B cell (primary cell): ENCODE measurements at regions of chr1 and their contacts with region 1.

Region 1: DNA sequence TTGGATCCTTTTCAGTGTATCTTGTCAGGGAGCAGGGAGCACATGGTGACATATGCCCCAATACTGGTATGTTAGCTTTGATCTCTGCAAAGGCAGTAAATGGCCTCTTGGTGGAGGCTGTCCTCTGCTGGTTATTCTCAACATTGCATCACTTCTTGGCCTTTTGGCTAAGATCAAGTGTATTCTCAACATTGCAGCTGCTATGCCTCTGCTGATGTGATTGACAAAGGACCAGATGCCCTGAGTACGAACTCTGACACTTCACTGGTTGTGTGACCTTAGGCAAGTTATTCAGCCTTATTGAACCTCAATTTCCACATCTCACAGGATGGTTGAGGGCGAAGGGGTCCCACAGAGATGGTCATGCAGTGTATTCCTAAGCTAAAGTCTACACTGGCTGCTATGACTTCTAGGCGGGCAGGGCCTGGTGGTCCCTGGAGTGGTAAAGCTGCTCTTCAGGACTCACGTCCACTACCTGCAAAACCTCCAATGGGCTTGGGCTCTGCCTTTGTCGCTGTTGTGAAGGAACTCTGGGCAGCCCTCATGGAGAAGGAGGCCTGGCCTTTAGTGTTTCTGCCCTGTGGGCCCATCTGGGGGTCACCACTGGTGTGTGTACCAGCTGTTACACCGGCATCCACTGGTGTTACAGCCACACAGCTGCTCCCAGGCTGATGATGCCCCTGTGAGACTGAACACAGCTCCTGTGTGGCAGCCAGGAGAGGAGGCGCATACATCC is 64.8 kb downstream of the DNTTIP2 start:
- DNase-seq: peak; percentile 80
- ATAC-seq: peak; percentile 91
- H3K4me3 ChIP-seq: no peak overlapping the region
- H3K4me3 Mint-ChIP-seq: no peak overlapping the region
- H3K27ac ChIP-seq: no peak overlapping the region
- H3K27ac Mint-ChIP-seq: no peak overlapping the region
- H3K4me1 ChIP-seq: peaks cover 14 to 22% of the 10 kb centered on the region in 2 donors
- H3K4me1 Mint-ChIP-seq: peaks cover 17% of the 10 kb centered on the region
- H3K27me3 ChIP-seq: no peaks in the 10 kb centered on the region
- H3K27me3 Mint-ChIP-seq: no peaks in the 10 kb centered on the region
- CTCF ChIP-seq: peak; percentile 97

Region 2: DNA sequence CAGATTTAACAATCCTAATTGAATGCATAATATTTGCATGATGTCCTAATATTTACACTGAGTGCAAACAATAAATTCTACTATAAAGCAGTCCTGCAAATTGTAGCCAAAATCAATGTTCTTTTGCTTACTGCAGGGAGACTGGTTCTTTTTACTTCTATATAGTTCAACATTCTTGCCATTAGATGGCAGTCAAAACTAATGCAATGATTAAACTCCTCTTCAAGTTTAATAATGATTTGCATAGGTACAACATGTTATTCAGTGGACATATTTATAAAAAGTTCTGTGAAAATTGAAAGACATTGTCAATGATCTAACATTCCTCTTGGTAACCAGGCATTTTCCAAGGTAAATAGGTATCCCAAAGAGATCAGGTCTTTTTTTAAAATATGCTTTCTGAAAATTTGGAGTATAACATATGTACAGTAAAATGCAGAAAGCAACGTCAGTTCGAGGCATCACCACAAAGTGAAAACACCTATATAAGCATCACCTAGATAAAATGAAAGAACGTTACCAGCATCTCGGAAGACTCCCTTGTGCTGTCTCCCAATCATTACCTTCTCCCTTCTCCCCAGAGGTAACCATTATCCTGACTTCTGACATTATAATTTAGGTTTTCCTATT is 376.1 kb before region 1 on chr1:
- CTCF ChIA-PET with region 1: interaction called, 22 read pairs
- POLR2A ChIA-PET with region 1: no interaction called
- intact Hi-C with region 1: loop called (anchors 1 kb)
- DNase-seq: peak; percentile 67
- ATAC-seq: peak; percentile 64
- H3K4me3 ChIP-seq: no peak overlapping the region
- H3K4me3 Mint-ChIP-seq: no peak overlapping the region
- H3K27ac ChIP-seq: no peak overlapping the region
- H3K27ac Mint-ChIP-seq: no peak overlapping the region
- H3K4me1 ChIP-seq: no peaks in the 10 kb centered on the region
- H3K4me1 Mint-ChIP-seq: no peaks in the 10 kb centered on the region
- H3K27me3 ChIP-seq: peaks cover 0 to 10% (median 0%) of the 10 kb centered on the region in 4 experiments
- H3K27me3 Mint-ChIP-seq: peaks cover 15% of the 10 kb centered on the region
- CTCF ChIP-seq: peak; percentile 77

Region 3: GRCh38 chr1:93638981-93639380 is 175.2 kb before region 1 on chr1:
- CTCF ChIA-PET with region 1: interaction called, 858 read pairs
- POLR2A ChIA-PET with region 1: no interaction called
- intact Hi-C with region 1: no loop called
- DNase-seq: no peak
- ATAC-seq: no peak
- H3K4me3 ChIP-seq: no peak overlapping the region
- H3K4me3 Mint-ChIP-seq: no peak overlapping the region
- H3K27ac ChIP-seq: no peak overlapping the region
- H3K27ac Mint-ChIP-seq: no peak overlapping the region
- H3K4me1 ChIP-seq: peaks cover 0 to 11% of the 10 kb centered on the region in 2 donors
- H3K4me1 Mint-ChIP-seq: peaks cover 19% of the 10 kb centered on the region
- H3K27me3 ChIP-seq: no peaks in the 10 kb centered on the region
- H3K27me3 Mint-ChIP-seq: no peaks in the 10 kb centered on the region
- CTCF ChIP-seq: no peak

Region 4: GRCh38 chr1:93734999-93735398 is 79.2 kb before region 1 on chr1:
- CTCF ChIA-PET with region 1: interaction called, 14 read pairs
- POLR2A ChIA-PET with region 1: no interaction called
- intact Hi-C with region 1: no loop called
- DNase-seq: peak; percentile 24
- ATAC-seq: no peak
- H3K4me3 ChIP-seq: no peak overlapping the region
- H3K4me3 Mint-ChIP-seq: no peak overlapping the region
- H3K27ac ChIP-seq: no peak overlapping the region
- H3K27ac Mint-ChIP-seq: no peak overlapping the region
- H3K4me1 ChIP-seq: peaks cover 0 to 8% of the 10 kb centered on the region in 2 donors
- H3K4me1 Mint-ChIP-seq: peaks cover 18% of the 10 kb centered on the region
- H3K27me3 ChIP-seq: no peaks in the 10 kb centered on the region
- H3K27me3 Mint-ChIP-seq: no peaks in the 10 kb centered on the region
- CTCF ChIP-seq: peak; percentile 33

Region 5: DNA sequence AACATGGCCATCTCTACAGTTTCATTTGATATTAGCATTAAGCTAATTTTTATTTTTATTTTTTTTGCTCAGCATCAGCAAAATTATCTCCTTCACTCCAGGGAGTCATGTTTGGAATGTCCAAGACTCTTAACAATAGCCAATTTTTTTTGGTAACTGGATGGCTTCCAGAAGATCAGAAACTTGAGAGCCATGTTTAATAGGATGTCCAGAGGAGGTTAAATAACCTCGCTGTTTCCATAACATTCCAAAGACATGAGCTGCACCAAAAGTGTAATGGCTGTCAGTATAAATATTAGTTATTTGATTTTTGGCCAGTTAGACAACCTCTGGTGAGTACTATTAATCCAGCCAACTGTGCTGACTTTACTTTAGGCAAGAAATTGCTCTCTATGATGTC is 15.9 kb before region 1 on chr1:
- CTCF ChIA-PET with region 1: interaction called, 21 read pairs
- POLR2A ChIA-PET with region 1: no interaction called
- intact Hi-C with region 1: no loop called
- DNase-seq: no peak
- ATAC-seq: no peak
- H3K4me3 ChIP-seq: no peak overlapping the region
- H3K4me3 Mint-ChIP-seq: no peak overlapping the region
- H3K27ac ChIP-seq: no peak overlapping the region
- H3K27ac Mint-ChIP-seq: no peak overlapping the region
- H3K4me1 ChIP-seq: no peaks in the 10 kb centered on the region
- H3K4me1 Mint-ChIP-seq: no peaks in the 10 kb centered on the region
- H3K27me3 ChIP-seq: no peaks in the 10 kb centered on the region
- H3K27me3 Mint-ChIP-seq: no peaks in the 10 kb centered on the region
- CTCF ChIP-seq: no peak